ENCODE measurements at regions of chr14 and their contacts with region 1.

Region 1: GRCh38 chr14:32202998-32203882 is at the start of gene RNU6-8:
- DNase-seq: peak; percentile 96
- ATAC-seq: peak; percentile 84
- H3K4me3 ChIP-seq: peak within 1 kb of the TSS; percentile 69 to 81 (median 75)
- H3K27ac ChIP-seq: peak within 1 kb of the TSS; percentile 87
- H3K4me1 ChIP-seq: peaks cover 21% of the 10 kb centered on the region
- H3K27me3 ChIP-seq: no peaks in the 10 kb centered on the region; a peak in 1 of 5 replicates
- CTCF ChIP-seq: no peak; the same call in 1 of the 2 replicates
- EP300 ChIP-seq: peak in 1 of 2 experiments; percentile 35; a peak in 1 of 4 replicates
- POLR2A ChIP-seq: peak in 1 of 2 experiments; percentile 66; a peak in 2 of 4 replicates
- RAD21 ChIP-seq: peak; percentile 55
- total RNA-seq, gene RNU6-8: under 0.01 TPM in 1 of 2 replicates, not detected in the other

Region 2: GRCh38 chr14:30621940-30622830 is 1581.1 kb before region 1 on chr14 and contains the start of gene SCFD1:
- CTCF ChIA-PET with region 1: no interaction called
- POLR2A ChIA-PET with region 1: no interaction called
- in situ Hi-C with region 1: no loop called
- intact Hi-C with region 1: loop called (anchors 5 kb)
- DNase-seq: peak; percentile 97
- ATAC-seq: peak; percentile 98
- H3K4me3 ChIP-seq: peak within 1 kb of the TSS; percentile 92 to 96 (median 94)
- H3K27ac ChIP-seq: peak within 1 kb of the TSS; percentile 87
- H3K4me1 ChIP-seq: peaks cover 43% of the 10 kb centered on the region
- H3K27me3 ChIP-seq: peaks cover 0 to 4% of the 10 kb centered on the region in 2 experiments; a peak in 2 of 5 replicates
- CTCF ChIP-seq: peak; percentile 13; the same call in 1 of the 2 replicates
- EP300 ChIP-seq: peak; percentile 45 to 79
- POLR2A ChIP-seq: peak; percentile 99
- RAD21 ChIP-seq: peak; percentile 85
- total RNA-seq, gene SCFD1: 256 and 318 TPM in 2 replicates

Region 3: GRCh38 chr14:31456841-31457664 is 746.2 kb before region 1 on chr14 and contains the start of gene DTD2:
- CTCF ChIA-PET with region 1: no interaction called
- POLR2A ChIA-PET with region 1: interaction called, 11 read pairs
- in situ Hi-C with region 1: no loop called
- intact Hi-C with region 1: loop called (anchors 2 kb)
- DNase-seq: peak; percentile 98
- ATAC-seq: peak; percentile 98
- H3K4me3 ChIP-seq: peak within 1 kb of the TSS; percentile 74 to 88 (median 84)
- H3K27ac ChIP-seq: peak within 1 kb of the TSS; percentile 87
- H3K4me1 ChIP-seq: peaks cover 21% of the 10 kb centered on the region
- H3K27me3 ChIP-seq: no peaks in the 10 kb centered on the region; a peak in 1 of 5 replicates
- CTCF ChIP-seq: no peak
- EP300 ChIP-seq: peak; percentile 22 to 60; a peak in 2 of 4 replicates
- POLR2A ChIP-seq: peak; percentile 98 to 99
- RAD21 ChIP-seq: peak; percentile 79
- total RNA-seq, gene DTD2: 49.8 and 68.8 TPM in 2 replicates

Region 4: DNA sequence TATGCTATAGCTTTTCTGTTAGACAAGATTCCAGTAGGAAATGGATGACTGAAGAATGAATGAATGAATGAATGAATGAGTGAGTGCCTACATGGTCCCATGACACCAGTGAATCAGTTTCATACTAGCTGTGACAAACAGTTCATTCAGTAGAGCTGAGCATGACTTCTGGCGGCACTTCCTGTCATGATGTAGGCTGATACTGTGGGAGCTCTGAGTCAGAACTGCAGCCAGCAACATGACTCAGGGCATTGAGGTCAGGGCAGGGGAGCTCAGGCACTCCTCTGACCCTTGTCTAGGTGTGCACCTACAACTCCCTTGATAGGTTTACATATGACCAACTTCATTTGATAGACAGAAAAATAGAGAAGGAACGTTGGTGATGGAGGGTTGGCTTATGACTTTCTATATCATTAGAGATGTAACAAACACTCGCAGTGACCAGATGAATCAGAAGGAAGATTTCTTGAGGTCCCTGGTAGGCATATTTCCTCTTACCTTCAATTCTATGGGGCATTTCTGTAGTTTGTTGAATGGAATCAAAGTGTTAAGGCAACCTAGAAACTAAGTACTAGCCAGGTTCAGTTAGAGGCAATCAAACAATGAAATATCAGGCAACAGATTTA is 265.4 kb before region 1 on chr14:
- CTCF ChIA-PET with region 1: no interaction called
- POLR2A ChIA-PET with region 1: interaction called, 4 read pairs
- in situ Hi-C with region 1: no loop called
- intact Hi-C with region 1: loop called (anchors 2 kb)
- DNase-seq: peak; percentile 98
- ATAC-seq: peak; percentile 88
- H3K4me3 ChIP-seq: no peak overlapping the region
- H3K27ac ChIP-seq: no peak overlapping the region
- H3K4me1 ChIP-seq: peaks cover 59% of the 10 kb centered on the region
- H3K27me3 ChIP-seq: no peaks in the 10 kb centered on the region
- CTCF ChIP-seq: no peak
- EP300 ChIP-seq: peak; percentile 33 to 84; a peak in 1 of 4 replicates
- POLR2A ChIP-seq: no peak
- RAD21 ChIP-seq: no peak

Region 5: GRCh38 chr14:32192712-32193373 is 10.4 kb before region 1 on chr14:
- CTCF ChIA-PET with region 1: no interaction called
- POLR2A ChIA-PET with region 1: no interaction called
- in situ Hi-C with region 1: no loop called
- intact Hi-C with region 1: loop called (anchors 1 kb)
- DNase-seq: no peak
- ATAC-seq: peak; percentile 87
- H3K4me3 ChIP-seq: no peak overlapping the region
- H3K27ac ChIP-seq: no peak overlapping the region
- H3K4me1 ChIP-seq: no peaks in the 10 kb centered on the region
- H3K27me3 ChIP-seq: no peaks in the 10 kb centered on the region
- CTCF ChIP-seq: no peak
- EP300 ChIP-seq: no peak
- POLR2A ChIP-seq: no peak
- RAD21 ChIP-seq: no peak

Region 6: DNA sequence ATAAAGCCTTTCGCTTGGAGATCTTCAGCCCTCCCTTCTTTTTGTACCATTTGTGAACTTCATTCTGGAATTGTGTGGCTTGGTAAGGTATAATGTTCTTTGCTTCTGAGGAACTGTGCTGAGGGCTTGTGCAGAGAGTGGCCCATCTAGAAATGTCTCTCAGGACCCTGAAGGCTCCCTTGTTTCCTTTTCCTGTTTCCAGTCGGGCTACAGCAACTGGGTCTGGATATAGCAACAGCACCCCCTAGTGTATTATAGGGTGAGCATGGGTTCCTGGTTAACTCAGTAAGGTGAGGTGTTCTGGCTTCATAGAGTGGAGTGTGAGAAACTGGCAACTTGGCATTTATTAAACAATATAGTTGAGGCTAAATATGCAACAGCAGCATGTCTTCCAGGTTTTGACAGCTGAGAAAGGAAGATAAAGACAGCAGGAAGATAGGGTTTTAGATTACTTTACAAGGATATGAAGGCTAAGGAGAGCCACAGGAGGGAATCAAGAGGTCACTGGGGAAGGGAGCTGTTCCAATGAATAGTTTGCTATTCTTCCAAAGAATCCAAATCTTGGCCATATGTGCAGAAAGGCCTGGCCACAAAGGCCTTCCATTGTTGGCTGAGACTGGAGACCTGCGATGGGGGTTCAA is 48.9 kb after region 1 on chr14:
- CTCF ChIA-PET with region 1: no interaction called
- POLR2A ChIA-PET with region 1: no interaction called
- in situ Hi-C with region 1: no loop called
- intact Hi-C with region 1: loop called (anchors 1 kb)
- DNase-seq: peak; percentile 89
- ATAC-seq: peak; percentile 88
- H3K4me3 ChIP-seq: no peak overlapping the region
- H3K27ac ChIP-seq: no peak overlapping the region
- H3K4me1 ChIP-seq: no peaks in the 10 kb centered on the region
- H3K27me3 ChIP-seq: no peaks in the 10 kb centered on the region
- CTCF ChIP-seq: peak; percentile 99
- EP300 ChIP-seq: no peak; a peak in 1 of 4 replicates
- POLR2A ChIP-seq: no peak
- RAD21 ChIP-seq: peak; percentile 97

Region 7: DNA sequence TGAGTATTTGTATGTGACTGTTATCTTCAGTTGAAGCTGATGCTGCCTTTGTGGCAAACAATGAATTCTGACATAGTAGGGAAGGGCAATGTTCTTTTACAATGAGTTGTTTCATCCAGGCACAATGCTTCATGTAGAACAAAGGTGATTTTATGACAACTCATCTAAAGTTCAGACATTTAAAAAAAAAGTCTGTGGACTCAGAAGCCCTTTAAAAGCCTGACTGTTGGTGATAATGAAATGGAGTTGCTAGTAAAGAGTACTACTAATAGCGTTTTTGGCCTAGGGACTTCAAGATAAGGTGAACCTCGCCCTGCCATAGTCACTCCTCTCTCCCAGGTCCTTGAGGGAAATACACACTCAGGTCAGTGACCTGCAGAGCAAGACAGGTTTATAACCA is 230.9 kb after region 1 on chr14:
- CTCF ChIA-PET with region 1: no interaction called
- POLR2A ChIA-PET with region 1: no interaction called
- in situ Hi-C with region 1: no loop called
- intact Hi-C with region 1: no loop called
- DNase-seq: no peak
- ATAC-seq: no peak
- H3K4me3 ChIP-seq: no peak overlapping the region
- H3K27ac ChIP-seq: no peak overlapping the region
- H3K4me1 ChIP-seq: no peaks in the 10 kb centered on the region
- H3K27me3 ChIP-seq: no peaks in the 10 kb centered on the region
- CTCF ChIP-seq: no peak
- EP300 ChIP-seq: no peak
- POLR2A ChIP-seq: no peak
- RAD21 ChIP-seq: no peak

Measured in HepG2 (cell line).